Right lobe of liver (tissue), 6 donors: ENCODE measurements at regions of chr1 and their contacts with region 1.

Region 1: DNA sequence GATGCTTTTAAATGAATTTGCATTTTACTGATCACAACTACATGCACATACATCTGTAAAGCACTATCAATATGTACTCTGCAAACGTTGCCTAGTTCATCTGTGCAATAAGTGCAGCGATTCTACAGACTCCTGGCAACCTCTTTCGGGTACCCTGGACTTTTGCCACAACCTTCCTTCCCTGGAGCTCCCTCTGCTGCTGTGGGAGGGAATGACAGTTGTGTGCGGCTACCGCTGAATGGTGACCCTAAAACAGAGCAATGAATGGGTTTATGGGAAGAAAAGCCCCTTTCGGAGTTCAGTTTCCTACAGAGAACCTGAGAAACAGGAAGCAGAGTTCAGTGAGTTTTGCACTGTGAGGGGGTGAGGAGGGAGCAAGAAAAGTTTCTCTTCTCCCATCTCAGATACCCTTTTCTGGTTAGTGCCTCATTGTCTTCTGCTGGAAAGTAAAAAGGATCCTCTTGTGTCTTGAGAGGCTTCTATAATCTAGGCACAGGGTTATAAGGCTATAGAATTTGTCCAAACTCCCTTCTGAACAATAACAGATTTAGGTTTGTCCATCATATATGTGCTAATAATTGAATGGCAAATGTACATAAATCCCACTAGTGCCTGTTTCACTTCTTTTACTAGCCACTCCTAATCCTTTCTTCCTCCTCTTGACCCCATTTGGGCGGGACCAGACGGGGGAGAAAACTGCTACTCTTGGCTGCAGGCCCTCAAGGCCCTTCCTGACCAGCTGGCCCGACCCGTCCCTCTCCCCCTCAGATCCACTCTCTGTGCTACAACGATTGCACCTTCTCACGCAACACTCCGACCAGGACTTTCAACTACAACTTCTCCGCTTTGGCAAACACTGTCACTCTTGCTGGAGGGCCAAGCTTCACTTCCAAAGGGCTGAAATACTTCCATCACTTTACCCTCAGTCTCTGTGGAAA is 19.8 kb upstream of the SARS1 start:
- DNase-seq: peak in 2 of 3 donors; percentile 51 to 70
- ATAC-seq: peak; percentile 73 to 96 (median 92)
- H3K4me3 ChIP-seq: no peak overlapping the region
- H3K27ac ChIP-seq: no peak overlapping the region
- H3K4me1 ChIP-seq: peaks cover 0 to 7% (median 0%) of the 10 kb centered on the region in 4 donors
- H3K27me3 ChIP-seq: no peaks in the 10 kb centered on the region
- CTCF ChIP-seq: peak; percentile 72 to 86 (median 78)
- POLR2A ChIP-seq: no peak

Region 2: DNA sequence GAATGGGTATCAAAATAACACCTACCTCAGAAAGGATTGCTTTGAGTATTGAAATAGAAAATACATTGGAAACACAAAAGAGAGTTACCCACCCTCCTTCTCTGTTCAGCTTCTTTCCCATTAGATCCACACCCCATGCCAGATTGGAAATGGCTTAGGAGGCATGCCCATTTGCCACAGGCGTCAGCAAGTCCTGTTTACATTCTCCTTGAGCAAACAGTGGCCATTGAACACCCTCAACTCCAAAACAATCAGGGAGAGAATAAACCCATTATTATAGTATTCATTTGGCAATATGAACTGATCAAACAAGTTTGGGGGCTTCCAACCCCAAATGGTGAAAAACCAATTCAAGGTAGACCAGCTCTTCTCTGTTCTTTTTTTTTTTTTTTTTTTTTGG is 77.6 kb before region 1 on chr1:
- intact Hi-C with region 1: loop called in 1 of 2 experiments (anchors 5 kb)
- DNase-seq: no peak
- ATAC-seq: no peak
- H3K4me3 ChIP-seq: no peak overlapping the region
- H3K27ac ChIP-seq: no peak overlapping the region
- H3K4me1 ChIP-seq: peaks cover 0 to 18% (median 0%) of the 10 kb centered on the region in 4 donors
- H3K27me3 ChIP-seq: peaks cover 5 to 6% of the 10 kb centered on the region in 2 donors
- CTCF ChIP-seq: no peak
- POLR2A ChIP-seq: no peak

Region 3: GRCh38 chr1:109263597-109264398 is 69.9 kb after region 1 on chr1:
- intact Hi-C with region 1: no loop called
- DNase-seq: peak; percentile 94 to 97 (median 96)
- ATAC-seq: peak; percentile 98 to 100 (median 99)
- H3K4me3 ChIP-seq: no peak overlapping the region
- H3K27ac ChIP-seq: no peak overlapping the region
- H3K4me1 ChIP-seq: no peaks in the 10 kb centered on the region
- H3K27me3 ChIP-seq: no peaks in the 10 kb centered on the region
- CTCF ChIP-seq: peak; percentile 95 to 100 (median 98)
- POLR2A ChIP-seq: no peak